OCI-LY7 (cell line): ENCODE measurements at regions of chr17 and their contacts with region 1.

Region 1: DNA sequence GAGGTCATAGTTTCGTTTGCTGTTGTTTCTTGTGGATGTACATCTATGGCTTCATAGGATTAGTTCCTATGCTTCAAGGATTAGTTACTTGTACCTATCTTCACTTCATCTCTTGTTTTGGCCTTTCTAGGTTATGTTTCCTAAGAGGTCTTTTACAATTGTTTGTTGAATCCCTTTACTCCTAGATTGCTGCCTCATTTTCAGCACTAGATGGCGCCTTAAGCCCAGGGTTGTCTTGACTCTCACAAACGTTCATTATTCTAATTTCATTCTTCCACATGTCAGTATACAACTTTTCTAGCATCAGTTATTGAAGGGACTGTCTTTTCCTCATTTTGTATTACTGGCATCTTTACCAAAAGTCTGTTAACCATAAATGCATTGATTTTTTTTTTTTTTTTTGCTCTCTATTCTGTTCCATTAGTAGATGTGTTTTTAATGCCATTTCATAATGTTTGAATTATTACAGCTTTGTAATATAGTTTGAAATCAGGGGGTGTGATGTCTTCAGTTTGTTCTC is 45.0 kb upstream of the NACA2 start:
- DNase-seq: peak; percentile 70
- H3K4me3 ChIP-seq: no peak overlapping the region
- H3K27ac ChIP-seq: no peak overlapping the region
- H3K4me1 ChIP-seq: no peaks in the 10 kb centered on the region
- CTCF ChIP-seq: peak; percentile 98

Region 2: DNA sequence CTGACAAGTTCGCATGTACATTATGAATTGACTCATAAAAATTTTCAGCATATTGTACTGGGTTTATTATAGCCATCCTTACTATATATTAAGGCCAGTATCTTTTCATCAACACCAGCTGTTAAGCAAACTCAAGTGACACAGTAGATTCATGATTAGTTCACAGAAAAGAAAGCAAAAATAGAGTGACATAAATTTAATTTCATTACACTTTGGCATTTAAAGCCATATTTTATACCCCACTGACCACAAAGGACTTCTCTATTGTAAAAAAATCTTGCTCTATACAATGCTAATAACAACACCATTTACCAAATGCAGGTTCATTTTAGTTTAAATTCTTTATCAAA is 24.3 kb before region 1 on chr17:
- CTCF ChIA-PET with region 1: no interaction called
- POLR2A ChIA-PET with region 1: no interaction called
- intact Hi-C with region 1: no loop called
- DNase-seq: no peak
- H3K4me3 ChIP-seq: no peak overlapping the region
- H3K27ac ChIP-seq: no peak overlapping the region
- H3K4me1 ChIP-seq: no peaks in the 10 kb centered on the region
- CTCF ChIP-seq: no peak

Region 3: DNA sequence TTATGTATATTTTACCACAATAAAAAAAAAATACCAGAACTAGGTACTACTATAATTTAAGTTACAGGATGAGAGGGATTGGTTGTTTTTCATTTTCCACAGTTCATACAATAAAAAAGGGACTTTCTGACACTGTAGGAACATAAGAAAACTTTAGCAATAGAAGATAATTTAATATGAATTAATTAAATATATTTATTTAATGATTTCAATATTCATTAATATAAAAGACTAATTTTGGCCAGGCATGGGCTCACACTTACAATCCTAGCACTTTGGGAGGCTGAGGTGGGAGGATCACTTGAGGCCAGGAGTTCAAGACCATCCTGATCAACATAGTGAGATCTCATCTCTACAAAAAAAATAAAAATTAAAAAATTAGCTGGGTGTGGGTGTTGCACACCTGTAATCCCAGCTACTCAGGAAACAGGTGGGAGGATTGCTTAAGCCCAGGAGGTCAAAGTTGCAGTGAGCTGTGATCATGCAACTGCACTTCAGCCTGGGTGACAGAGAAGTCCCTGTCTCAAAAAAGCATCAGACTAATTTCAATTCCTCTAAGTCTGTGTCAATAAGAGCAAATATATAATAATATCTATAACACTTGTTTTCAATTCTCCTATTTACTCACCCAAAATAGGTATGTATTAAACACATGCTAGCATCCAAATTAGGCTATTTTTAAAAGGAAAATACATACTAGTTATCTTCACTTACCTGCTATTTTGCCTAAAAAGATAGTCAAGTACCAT is 147.8 kb after region 1 on chr17:
- CTCF ChIA-PET with region 1: no interaction called
- POLR2A ChIA-PET with region 1: no interaction called
- intact Hi-C with region 1: loop called (anchors 5 kb)
- DNase-seq: peak; percentile 78
- H3K4me3 ChIP-seq: peak overlapping the region; percentile 3
- H3K27ac ChIP-seq: peak overlapping the region; percentile 86
- H3K4me1 ChIP-seq: peaks cover 40% of the 10 kb centered on the region
- CTCF ChIP-seq: no peak

Region 4: GRCh38 chr17:61837175-61838051 is 201.4 kb after region 1 on chr17:
- CTCF ChIA-PET with region 1: no interaction called
- POLR2A ChIA-PET with region 1: no interaction called
- intact Hi-C with region 1: loop called (anchors 1 kb)
- DNase-seq: peak; percentile 76
- H3K4me3 ChIP-seq: no peak overlapping the region
- H3K27ac ChIP-seq: no peak overlapping the region
- H3K4me1 ChIP-seq: no peaks in the 10 kb centered on the region
- CTCF ChIP-seq: peak; percentile 94

Region 5: GRCh38 chr17:62109378-62109902 is 473.5 kb after region 1 on chr17:
- CTCF ChIA-PET with region 1: no interaction called
- POLR2A ChIA-PET with region 1: no interaction called
- intact Hi-C with region 1: loop called (anchors 1 kb)
- DNase-seq: peak; percentile 72
- H3K4me3 ChIP-seq: no peak overlapping the region
- H3K27ac ChIP-seq: no peak overlapping the region
- H3K4me1 ChIP-seq: no peaks in the 10 kb centered on the region
- CTCF ChIP-seq: peak; percentile 87